ENCODE measurements at regions of chr1 and their contacts with region 1.

Region 1: GRCh38 chr1:154558575-154559465 is at the start of gene UBE2Q1:
- DNase-seq: peak; percentile 99 to 100
- ATAC-seq: peak; percentile 99
- H3K4me3 ChIP-seq: peak within 1 kb of the TSS; percentile 70 to 79
- H3K27ac ChIP-seq: peak within 1 kb of the TSS; percentile 38 to 53
- H3K4me1 ChIP-seq: peaks cover 2 to 8% of the 10 kb centered on the region in 2 donors
- H3K27me3 ChIP-seq: no peaks in the 10 kb centered on the region
- total RNA-seq, gene UBE2Q1: 55.5 to 63.9 TPM

Region 2: GRCh38 chr1:154607609-154608396 is 49.0 kb after region 1 on chr1 and contains the start of gene ADAR:
- intact Hi-C with region 1: loop called in 1 of 2 experiments (anchors 2 kb)
- DNase-seq: peak; percentile 94 to 96
- ATAC-seq: peak; percentile 95
- H3K4me3 ChIP-seq: peak within 1 kb of the TSS; percentile 76 to 96
- H3K27ac ChIP-seq: peak within 1 kb of the TSS; percentile 81 to 84
- H3K4me1 ChIP-seq: no peaks in the 10 kb centered on the region
- H3K27me3 ChIP-seq: no peaks in the 10 kb centered on the region
- total RNA-seq, gene ADAR: 125 to 138 TPM

Region 3: GRCh38 chr1:154760469-154760933 is 201.7 kb after region 1 on chr1:
- intact Hi-C with region 1: loop called in 1 of 2 experiments (anchors 2 kb)
- DNase-seq: peak; percentile 63 to 88
- ATAC-seq: peak; percentile 82
- H3K4me3 ChIP-seq: no peak overlapping the region
- H3K27ac ChIP-seq: no peak overlapping the region
- H3K4me1 ChIP-seq: no peaks in the 10 kb centered on the region
- H3K27me3 ChIP-seq: no peaks in the 10 kb centered on the region

Region 4: GRCh38 chr1:154878371-154879022 is 319.7 kb after region 1 on chr1:
- intact Hi-C with region 1: loop called (anchors 2 kb)
- DNase-seq: peak; percentile 78 to 92
- ATAC-seq: peak; percentile 87
- H3K4me3 ChIP-seq: no peak overlapping the region
- H3K27ac ChIP-seq: no peak overlapping the region
- H3K4me1 ChIP-seq: no peaks in the 10 kb centered on the region
- H3K27me3 ChIP-seq: no peaks in the 10 kb centered on the region

Region 5: GRCh38 chr1:154936555-154937084 is 377.8 kb after region 1 on chr1 and contains the start of gene PMVK:
- intact Hi-C with region 1: loop called in 1 of 2 experiments (anchors 5 kb)
- DNase-seq: peak; percentile 97
- ATAC-seq: peak; percentile 97
- H3K4me3 ChIP-seq: peak within 1 kb of the TSS; percentile 42 to 51
- H3K27ac ChIP-seq: peak within 1 kb of the TSS; percentile 68 to 95
- H3K4me1 ChIP-seq: no peaks in the 10 kb centered on the region
- H3K27me3 ChIP-seq: no peaks in the 10 kb centered on the region
- total RNA-seq, gene PMVK: 21.9 to 27.3 TPM

Measured in aorta (tissue), 5 donors.